ENCODE measurements at regions of chr4 and their contacts with region 1.

Region 1: GRCh38 chr4:67909905-67910584 is 26.2 kb upstream of the TMPRSS11D start:
- DNase-seq: no peak
- ATAC-seq: peak; percentile 40; the same call in 1 of the 3 replicates
- H3K4me3 ChIP-seq: no peak overlapping the region
- H3K27ac ChIP-seq: no peak overlapping the region
- H3K4me1 ChIP-seq: no peaks in the 10 kb centered on the region
- H3K27me3 ChIP-seq: no peaks in the 10 kb centered on the region
- CTCF ChIP-seq: peak; percentile 44 to 54 (median 51); a peak in 5 of 6 replicates
- EP300 ChIP-seq: no peak
- POLR2A ChIP-seq: no peak
- RAD21 ChIP-seq: peak; percentile 57

Region 2: DNA sequence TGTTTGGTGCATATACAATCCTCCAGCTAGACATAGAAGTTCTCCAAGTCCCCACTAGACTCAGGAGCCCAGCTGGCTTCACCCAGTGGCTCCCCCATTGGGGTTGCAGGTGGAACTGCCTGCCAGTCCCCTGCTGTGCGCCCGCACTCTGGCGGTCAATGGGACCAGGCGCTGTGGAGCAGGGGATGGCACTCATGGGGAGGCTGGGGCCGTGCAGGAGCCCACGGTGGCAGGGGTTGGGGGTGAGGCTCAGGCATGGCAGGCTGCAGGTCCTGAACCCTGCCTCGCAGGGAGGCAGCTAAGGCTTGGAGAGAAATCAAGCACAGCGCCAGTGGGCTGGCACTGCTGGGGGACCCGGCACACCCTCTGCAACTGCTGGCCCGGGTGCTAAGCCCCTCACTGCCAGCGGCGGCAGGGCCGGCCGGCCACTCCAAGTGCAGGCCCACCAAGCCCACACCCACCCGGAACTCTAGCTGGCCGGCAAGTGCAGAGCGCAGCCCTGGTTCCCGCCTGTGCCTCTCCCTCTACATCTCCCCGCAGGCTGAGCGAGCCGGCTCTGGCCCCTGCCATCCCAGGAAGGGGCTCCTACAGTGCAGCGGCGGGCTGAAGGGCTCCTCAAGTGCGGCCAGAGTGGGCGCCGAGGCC is 13.5 kb before region 1 on chr4:
- CTCF ChIA-PET with region 1: interaction called, 10 read pairs
- POLR2A ChIA-PET with region 1: no interaction called
- RAD21 ChIA-PET with region 1: no interaction called
- SMC1A ChIA-PET with region 1: interaction called, 14 read pairs
- in situ Hi-C with region 1: no loop called
- intact Hi-C with region 1: no loop called
- DNase-seq: no peak
- ATAC-seq: no peak
- H3K4me3 ChIP-seq: no peak overlapping the region
- H3K27ac ChIP-seq: no peak overlapping the region
- H3K4me1 ChIP-seq: no peaks in the 10 kb centered on the region
- H3K27me3 ChIP-seq: no peaks in the 10 kb centered on the region
- CTCF ChIP-seq: no peak
- EP300 ChIP-seq: no peak
- POLR2A ChIP-seq: no peak
- RAD21 ChIP-seq: no peak